Posterior vena cava (tissue), 2 donors: ENCODE measurements at regions of chr15 and their contacts with region 1.

Region 1: DNA sequence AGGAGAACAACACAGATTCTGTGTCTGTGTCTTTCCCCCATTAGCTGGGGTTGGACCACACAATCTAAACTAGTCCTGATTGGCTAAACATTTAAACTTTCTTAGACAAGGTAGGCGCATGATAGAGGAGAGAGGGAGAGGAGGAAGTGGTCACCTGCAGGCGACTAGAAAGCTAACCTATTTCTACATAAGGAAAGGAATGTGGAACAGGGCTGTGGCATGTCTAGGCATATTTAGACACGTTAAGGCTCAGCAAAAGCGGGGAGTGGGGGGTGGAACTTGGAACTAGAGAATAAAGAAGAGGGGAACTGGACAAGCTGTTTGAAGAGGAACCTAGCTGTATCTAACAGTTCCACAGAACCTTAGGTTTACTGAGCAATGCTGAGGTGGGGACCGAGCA is 12.8 kb downstream of the LRRC28 start:
- DNase-seq: no peak

Region 2: DNA sequence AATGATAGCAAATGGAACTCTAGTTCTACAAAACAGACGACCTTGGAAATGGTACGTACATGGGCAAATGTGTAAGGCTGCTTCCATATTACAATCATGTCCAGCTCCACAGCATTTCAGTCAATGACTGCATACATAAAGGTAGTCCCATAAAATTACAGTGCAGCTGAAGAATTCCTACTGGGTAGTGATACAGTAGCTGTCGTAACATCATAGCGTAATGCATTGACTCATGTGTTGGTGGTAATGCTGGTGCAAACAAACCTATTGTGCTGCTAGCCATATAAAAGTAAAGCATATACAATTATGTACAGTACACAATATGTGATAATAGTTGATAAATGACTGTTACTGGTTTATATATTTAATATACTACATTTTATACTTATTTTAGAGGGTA is 33.3 kb before region 1 on chr15:
- intact Hi-C with region 1: loop called in 1 of 2 experiments (anchors 2 kb)
- DNase-seq: no peak

Region 3: GRCh38 chr15:99306694-99307338 is 42.7 kb after region 1 on chr15:
- intact Hi-C with region 1: no loop called
- DNase-seq: no peak